ENCODE measurements at regions of chr1 and their contacts with region 1.

Region 1: DNA sequence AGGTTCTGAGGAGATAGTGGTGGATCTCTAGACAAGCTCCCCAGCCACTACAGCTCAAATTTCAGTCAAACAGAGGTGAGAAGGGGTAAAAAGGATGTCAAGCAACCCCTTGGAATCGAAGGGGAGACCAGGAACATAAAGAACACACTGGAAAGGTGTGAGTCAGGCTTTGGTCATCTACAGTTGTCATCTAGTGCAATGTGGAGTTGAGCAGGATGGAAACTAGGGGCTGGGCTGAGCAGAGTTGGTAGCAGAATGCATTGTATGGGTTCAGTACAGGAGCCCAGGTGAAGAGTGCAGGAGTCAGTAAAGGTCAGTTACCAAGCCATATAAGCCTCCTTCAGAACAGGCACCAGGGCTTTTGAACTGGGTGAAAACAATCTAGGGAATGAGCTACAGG is 52.7 kb upstream of the VAV3 start:
- DNase-seq: peak; percentile 64
- ATAC-seq: peak; percentile 70
- H3K4me3 ChIP-seq: no peak overlapping the region
- H3K27ac ChIP-seq: no peak overlapping the region
- H3K4me1 ChIP-seq: peaks cover 23% of the 10 kb centered on the region
- H3K27me3 ChIP-seq: no peaks in the 10 kb centered on the region
- CTCF ChIP-seq: no peak

Region 2: DNA sequence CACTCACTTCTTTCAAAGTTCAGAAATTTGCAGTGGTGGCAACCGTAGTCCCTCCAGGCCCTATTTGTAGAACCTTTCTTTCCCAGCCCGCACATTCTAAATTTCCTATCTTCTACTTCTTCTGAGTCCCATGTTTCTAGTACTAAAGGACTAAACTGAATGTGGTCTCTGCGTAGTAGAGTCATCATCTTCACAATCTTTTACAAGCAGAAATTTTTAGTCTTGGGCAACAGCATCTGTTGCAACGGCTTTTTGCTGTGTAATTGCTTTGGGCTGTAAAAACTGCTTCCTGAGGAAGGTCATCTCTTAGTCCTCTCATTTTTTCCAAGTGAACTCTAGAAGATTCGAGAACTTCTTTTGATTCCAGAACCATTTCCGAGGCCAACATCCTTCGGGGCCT is 76.6 kb before region 1 on chr1:
- CTCF ChIA-PET with region 1: no interaction called
- POLR2A ChIA-PET with region 1: no interaction called
- intact Hi-C with region 1: no loop called
- DNase-seq: no peak
- ATAC-seq: no peak
- H3K4me3 ChIP-seq: no peak overlapping the region
- H3K27ac ChIP-seq: no peak overlapping the region
- H3K4me1 ChIP-seq: peaks cover 16% of the 10 kb centered on the region
- H3K27me3 ChIP-seq: no peaks in the 10 kb centered on the region
- CTCF ChIP-seq: no peak

Region 3: DNA sequence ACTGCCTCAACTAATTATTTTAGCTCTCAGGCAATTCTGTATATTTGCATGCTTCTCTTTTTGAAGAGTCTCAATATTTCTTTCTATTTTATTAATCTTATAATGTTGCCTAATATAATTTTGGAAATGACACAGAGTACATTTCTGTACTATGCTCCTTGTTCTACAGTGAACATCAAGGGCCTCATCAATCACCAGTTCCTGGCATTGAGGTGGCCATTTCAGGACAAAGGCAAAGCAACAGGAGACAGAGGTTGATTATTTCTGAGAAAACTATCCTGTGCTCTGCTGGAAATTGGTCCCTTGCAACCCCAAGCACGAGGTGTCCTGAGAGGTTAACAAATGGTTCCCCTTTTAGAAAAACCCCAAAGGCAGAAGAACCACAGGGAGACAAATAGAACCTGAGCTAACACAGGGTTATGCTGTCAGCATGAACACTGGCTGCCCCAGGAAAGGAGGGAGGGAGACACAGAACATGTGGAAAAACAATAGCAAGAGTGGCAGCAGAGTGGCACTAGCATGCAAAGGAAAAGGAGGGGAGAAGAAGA is 11.2 kb after region 1 on chr1:
- CTCF ChIA-PET with region 1: no interaction called
- POLR2A ChIA-PET with region 1: interaction called, 10 read pairs
- intact Hi-C with region 1: no loop called
- DNase-seq: no peak
- ATAC-seq: no peak
- H3K4me3 ChIP-seq: no peak overlapping the region
- H3K27ac ChIP-seq: no peak overlapping the region
- H3K4me1 ChIP-seq: peaks cover 2% of the 10 kb centered on the region
- H3K27me3 ChIP-seq: no peaks in the 10 kb centered on the region
- CTCF ChIP-seq: no peak